CD4-positive, alpha-beta memory T cell (primary cell): ENCODE measurements at regions of chr4 and their contacts with region 1.

Region 1: DNA sequence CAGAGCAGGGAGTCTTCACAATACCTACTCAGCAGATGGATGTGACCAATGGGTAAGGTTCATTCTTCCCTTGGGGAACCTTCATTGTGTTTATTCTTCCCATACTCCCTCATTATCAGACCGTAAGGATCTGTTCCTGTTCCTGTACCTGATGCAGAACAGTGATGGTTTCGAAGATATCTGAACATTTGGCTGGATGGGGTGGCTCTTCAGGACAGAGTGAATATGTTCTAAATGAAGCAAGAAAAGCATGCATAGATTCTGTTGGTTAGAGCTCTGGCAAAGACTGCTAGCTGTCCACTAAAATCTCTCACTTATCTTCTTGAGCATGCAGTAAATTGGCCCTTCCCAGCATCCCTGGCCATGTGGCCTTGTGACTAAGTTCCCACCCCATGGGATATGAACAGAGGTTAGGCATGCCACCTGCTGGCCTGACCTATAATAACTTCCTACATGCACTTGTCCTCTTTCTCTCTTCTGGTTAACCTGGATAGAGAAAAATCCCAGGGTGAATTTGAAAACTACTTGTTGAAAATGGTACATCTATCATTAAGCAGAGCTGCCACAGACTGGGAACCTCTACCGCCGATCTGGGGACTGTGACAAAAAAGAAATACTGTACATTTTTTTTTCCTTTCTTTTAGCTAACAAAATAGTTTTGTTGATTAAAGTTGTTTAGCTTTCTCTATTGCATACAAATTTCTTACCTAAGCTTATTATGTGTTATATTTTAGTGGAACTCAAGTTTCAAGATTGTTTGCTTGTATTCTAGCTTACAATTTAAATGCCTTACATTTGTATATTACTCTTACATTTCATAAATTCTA is 60.0 kb upstream of the BANK1 start:
- DNase-seq: peak; percentile 23 to 38 (median 35)
- H3K4me3 ChIP-seq: no peak overlapping the region
- H3K4me3 Mint-ChIP-seq: no peak overlapping the region
- H3K27ac ChIP-seq: no peak overlapping the region
- H3K27ac Mint-ChIP-seq: peak overlapping the region in 1 of 7 donors; percentile 6
- H3K4me1 ChIP-seq: no peaks in the 10 kb centered on the region
- H3K4me1 Mint-ChIP-seq: peaks cover 0 to 1% (median 0%) of the 10 kb centered on the region in 4 donors
- H3K27me3 ChIP-seq: no peaks in the 10 kb centered on the region
- H3K27me3 Mint-ChIP-seq: peaks cover 0 to 5% of the 10 kb centered on the region in 2 donors

Region 2: DNA sequence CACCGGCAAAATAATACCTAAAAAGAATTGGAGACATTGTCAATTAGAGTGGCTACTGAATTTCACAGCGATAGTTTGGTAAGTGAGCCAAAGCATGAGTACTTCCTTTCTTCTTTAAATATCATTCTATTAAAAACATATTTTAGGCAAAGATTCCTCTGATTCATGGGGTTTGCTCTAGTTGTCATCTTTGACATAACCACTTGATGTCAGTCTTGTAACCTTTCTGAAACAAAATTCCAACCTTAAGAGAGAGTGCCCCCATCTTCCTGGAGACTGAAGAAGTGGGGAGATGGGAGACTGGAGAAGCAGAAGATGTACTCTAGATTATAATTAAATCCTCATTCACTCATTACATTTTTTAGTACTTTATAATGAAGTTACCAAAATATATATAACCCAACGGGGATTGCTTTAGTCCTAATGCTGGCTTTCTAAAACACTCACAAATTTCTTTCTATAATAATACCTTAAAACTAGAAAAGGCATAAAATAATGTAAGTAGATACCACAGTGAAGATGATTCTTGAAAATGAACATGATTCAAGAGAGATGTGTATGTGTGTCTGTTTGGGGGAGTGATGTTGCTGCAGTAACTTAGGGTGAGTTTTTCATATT is 1309.0 kb before region 1 on chr4:
- CTCF ChIA-PET with region 1: interaction called, 3 read pairs
- POLR2A ChIA-PET with region 1: no interaction called
- intact Hi-C with region 1: loop called (anchors 1 kb)
- DNase-seq: peak in 1 of 5 donors; percentile 1
- H3K4me3 ChIP-seq: no peak overlapping the region
- H3K4me3 Mint-ChIP-seq: no peak overlapping the region
- H3K27ac ChIP-seq: no peak overlapping the region
- H3K27ac Mint-ChIP-seq: no peak overlapping the region
- H3K4me1 ChIP-seq: no peaks in the 10 kb centered on the region
- H3K4me1 Mint-ChIP-seq: no peaks in the 10 kb centered on the region
- H3K27me3 ChIP-seq: no peaks in the 10 kb centered on the region
- H3K27me3 Mint-ChIP-seq: peaks cover 0 to 4% of the 10 kb centered on the region in 2 donors

Region 3: DNA sequence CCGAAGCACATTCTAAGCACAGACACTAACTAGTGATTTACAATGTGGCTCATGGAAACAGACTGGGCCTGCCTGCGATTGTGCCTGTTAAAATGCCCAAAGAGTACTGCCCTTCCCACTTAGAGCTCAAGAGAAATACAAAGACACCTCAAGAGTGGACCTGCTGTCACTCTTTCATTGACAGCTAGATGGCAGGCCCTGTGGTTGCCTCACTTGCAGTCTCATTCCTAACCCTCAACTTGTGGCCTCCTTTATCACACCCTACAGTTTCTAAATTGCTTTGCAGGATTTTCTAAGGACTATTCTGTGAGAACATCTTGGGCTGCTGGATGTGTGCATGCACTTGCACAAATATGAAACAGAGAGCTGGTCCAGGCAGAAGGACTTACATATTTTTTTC is 881.6 kb before region 1 on chr4:
- CTCF ChIA-PET with region 1: interaction called, 10 read pairs
- POLR2A ChIA-PET with region 1: no interaction called
- intact Hi-C with region 1: loop called (anchors 1 kb)
- DNase-seq: peak in 4 of 5 donors; percentile 2 to 5 (median 4)
- H3K4me3 ChIP-seq: no peak overlapping the region
- H3K4me3 Mint-ChIP-seq: no peak overlapping the region
- H3K27ac ChIP-seq: no peak overlapping the region
- H3K27ac Mint-ChIP-seq: no peak overlapping the region
- H3K4me1 ChIP-seq: no peaks in the 10 kb centered on the region
- H3K4me1 Mint-ChIP-seq: peaks cover 0 to 2% (median 0%) of the 10 kb centered on the region in 4 donors
- H3K27me3 ChIP-seq: no peaks in the 10 kb centered on the region
- H3K27me3 Mint-ChIP-seq: no peaks in the 10 kb centered on the region

Region 4: DNA sequence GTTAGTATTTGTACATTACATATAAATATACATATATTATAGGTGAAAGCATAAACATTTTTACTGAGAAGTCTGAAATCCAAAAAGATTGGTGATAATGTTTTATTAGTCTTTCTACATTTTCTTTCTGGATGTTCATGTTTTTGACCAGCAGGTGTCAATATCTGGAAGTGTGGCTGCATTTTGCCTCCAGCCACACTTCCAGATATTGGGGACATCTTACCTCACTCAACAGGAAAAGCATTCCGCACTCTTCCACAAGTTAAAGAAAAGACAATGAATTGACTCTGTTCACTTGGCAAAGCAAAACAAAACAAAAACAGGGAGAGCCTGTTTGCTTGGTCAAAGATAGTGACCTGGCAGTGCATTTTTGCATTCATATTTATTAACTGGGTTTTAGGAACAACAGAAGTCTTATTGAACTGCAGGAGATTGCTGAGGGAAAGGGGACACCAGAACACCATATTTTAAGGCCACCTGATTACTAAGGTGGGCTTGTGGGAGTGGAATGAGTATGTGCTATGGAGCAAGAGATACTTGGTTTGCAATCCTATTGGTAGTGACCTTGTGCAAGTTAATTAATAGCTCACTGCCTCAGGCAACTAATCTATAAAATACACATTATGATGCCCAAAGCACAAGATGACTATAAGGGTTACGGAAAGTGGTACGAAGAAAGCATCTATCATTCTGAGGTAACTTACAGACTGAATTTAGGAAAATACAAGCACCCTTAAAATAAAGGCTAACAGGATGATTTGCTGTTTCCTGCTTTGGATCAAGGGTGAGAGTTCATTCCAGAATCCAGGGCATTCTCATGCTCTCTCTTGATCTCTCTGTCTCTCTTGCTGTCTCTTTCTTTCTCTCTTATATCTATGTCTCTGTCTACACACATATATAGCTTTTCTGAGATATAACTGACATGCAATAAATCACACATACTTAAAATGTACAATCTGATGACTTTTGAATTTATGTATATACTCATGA is 822.7 kb before region 1 on chr4:
- CTCF ChIA-PET with region 1: no interaction called
- POLR2A ChIA-PET with region 1: no interaction called
- intact Hi-C with region 1: loop called (anchors 1 kb)
- DNase-seq: no peak
- H3K4me3 ChIP-seq: no peak overlapping the region
- H3K4me3 Mint-ChIP-seq: peak overlapping the region in 1 of 8 donors; percentile 21
- H3K27ac ChIP-seq: no peak overlapping the region
- H3K27ac Mint-ChIP-seq: peak overlapping the region in 2 of 7 donors; percentile 25 to 44
- H3K4me1 ChIP-seq: no peaks in the 10 kb centered on the region
- H3K4me1 Mint-ChIP-seq: peaks cover 0 to 3% (median 0%) of the 10 kb centered on the region in 4 donors
- H3K27me3 ChIP-seq: no peaks in the 10 kb centered on the region
- H3K27me3 Mint-ChIP-seq: no peaks in the 10 kb centered on the region

Region 5: DNA sequence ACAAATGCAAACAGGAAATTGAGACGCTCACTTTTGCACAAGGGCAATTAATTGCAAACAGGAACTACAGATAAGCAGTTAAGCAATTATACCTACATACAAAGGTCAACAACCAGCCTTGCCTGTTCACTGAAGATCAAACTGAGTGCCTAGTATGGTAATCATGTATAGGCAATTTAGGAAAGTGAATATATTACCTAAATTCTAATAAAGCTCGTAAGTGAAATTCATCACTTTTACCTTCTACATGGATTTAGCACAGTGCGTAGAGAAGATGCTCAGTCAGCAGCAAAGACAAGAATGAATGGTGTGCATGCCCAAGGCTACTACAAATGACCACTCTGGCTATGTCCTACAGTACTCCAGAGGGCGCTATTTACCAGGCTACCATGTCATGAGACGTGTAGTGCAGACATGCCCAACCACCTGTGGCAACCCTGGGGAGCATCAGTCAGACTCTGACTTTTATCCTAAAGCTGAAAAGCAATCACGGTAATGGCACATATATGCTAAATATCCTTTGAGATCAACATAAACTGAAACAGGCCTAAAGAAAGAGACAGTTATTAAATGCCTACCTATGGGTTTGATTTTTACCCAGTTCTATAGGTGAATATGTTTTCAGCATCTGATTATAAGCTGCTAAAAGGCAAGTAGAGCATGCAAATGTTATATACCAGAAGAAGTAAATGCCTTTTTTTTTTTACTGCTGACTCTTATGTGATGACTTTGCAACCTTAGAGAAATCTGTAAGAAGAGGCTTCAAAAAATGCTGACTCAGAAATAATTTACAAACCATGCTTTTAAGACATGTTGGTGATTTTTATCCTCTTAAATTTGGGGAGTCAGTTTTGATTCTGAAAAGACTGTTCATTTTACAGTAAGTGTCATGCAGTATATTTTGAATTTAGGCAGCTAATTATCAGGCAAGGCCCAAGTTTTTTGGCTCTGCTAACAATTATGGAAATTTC is 561.2 kb before region 1 on chr4:
- CTCF ChIA-PET with region 1: interaction called, 23 read pairs
- POLR2A ChIA-PET with region 1: no interaction called
- intact Hi-C with region 1: loop called (anchors 1 kb)
- DNase-seq: peak; percentile 45 to 64 (median 54)
- H3K4me3 ChIP-seq: no peak overlapping the region
- H3K4me3 Mint-ChIP-seq: no peak overlapping the region
- H3K27ac ChIP-seq: no peak overlapping the region
- H3K27ac Mint-ChIP-seq: no peak overlapping the region
- H3K4me1 ChIP-seq: peaks cover 8% of the 10 kb centered on the region
- H3K4me1 Mint-ChIP-seq: peaks cover 4 to 13% (median 6%) of the 10 kb centered on the region in 4 donors
- H3K27me3 ChIP-seq: no peaks in the 10 kb centered on the region
- H3K27me3 Mint-ChIP-seq: no peaks in the 10 kb centered on the region

Region 6: DNA sequence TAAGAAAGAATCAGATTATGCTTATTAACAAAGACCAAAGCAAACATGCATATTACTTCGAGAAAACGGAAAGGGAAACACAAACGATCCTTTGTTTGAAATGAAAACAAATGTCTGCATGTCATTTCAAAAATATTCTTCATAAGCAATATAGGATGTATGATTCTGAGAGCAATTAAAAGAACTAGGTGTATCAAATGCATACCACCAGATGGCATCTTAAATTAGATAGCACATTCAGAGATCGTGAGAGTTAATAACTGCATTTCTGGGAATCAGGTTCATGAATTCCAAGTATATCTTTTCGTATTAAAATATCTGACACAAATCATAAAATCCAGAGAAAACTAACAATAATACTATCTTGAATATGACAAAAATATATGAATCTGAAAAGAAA is 542.7 kb before region 1 on chr4:
- CTCF ChIA-PET with region 1: interaction called, 5 read pairs
- POLR2A ChIA-PET with region 1: no interaction called
- intact Hi-C with region 1: loop called (anchors 5 kb)
- DNase-seq: peak in 3 of 5 donors; percentile 8 to 14 (median 10)
- H3K4me3 ChIP-seq: no peak overlapping the region
- H3K4me3 Mint-ChIP-seq: peak overlapping the region in 4 of 8 donors; percentile 12 to 48 (median 22)
- H3K27ac ChIP-seq: no peak overlapping the region
- H3K27ac Mint-ChIP-seq: no peak overlapping the region
- H3K4me1 ChIP-seq: peaks cover 11% of the 10 kb centered on the region
- H3K4me1 Mint-ChIP-seq: peaks cover 24 to 53% (median 31%) of the 10 kb centered on the region in 4 donors
- H3K27me3 ChIP-seq: no peaks in the 10 kb centered on the region
- H3K27me3 Mint-ChIP-seq: no peaks in the 10 kb centered on the region